Psoas muscle (tissue), 8 donors: ENCODE measurements at regions of chr16 and their contacts with region 1.

Region 1: DNA sequence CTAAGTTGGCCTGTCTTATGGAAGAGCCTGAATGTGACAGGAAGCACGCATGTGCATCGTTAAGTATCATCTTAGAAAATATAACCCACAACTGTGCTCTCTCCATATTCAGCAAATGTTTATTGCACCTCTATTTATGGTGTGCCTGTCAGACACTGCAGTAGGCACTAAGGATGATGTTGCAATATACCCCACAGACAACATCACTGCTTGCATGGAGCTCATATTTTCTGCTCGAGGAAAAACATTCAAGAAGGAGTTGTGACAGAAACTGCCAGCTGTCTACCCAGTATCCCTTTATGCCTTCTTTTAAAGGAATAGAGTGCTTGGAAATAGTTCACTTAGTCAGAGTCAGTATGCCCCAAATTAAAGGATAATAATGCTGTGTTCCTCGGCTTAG is 132.3 kb upstream of the RBFOX1 start:
- DNase-seq: no peak
- ATAC-seq: no peak
- H3K4me3 ChIP-seq: no peak overlapping the region
- H3K27ac ChIP-seq: no peak overlapping the region
- H3K4me1 ChIP-seq: no peaks in the 10 kb centered on the region
- H3K27me3 ChIP-seq: no peaks in the 10 kb centered on the region
- CTCF ChIP-seq: no peak

Region 2: GRCh38 chr16:7177875-7178505 is 22.3 kb before region 1 on chr16:
- intact Hi-C with region 1: loop called in 1 of 2 experiments (anchors 2 kb)
- DNase-seq: no peak
- ATAC-seq: no peak
- H3K4me3 ChIP-seq: no peak overlapping the region
- H3K27ac ChIP-seq: no peak overlapping the region
- H3K4me1 ChIP-seq: no peaks in the 10 kb centered on the region
- H3K27me3 ChIP-seq: peaks cover 0 to 1% (median 0%) of the 10 kb centered on the region in 3 donors
- CTCF ChIP-seq: no peak